Caco-2 (cell line): ENCODE measurements at regions of chr16 and their contacts with region 1.

Region 1: GRCh38 chr16:57720142-57720575 is 15.4 kb upstream of the KATNB1 start:
- DNase-seq: peak; percentile 80 to 90
- H3K4me3 ChIP-seq: no peak overlapping the region
- H3K4me3 Mint-ChIP-seq: no peak overlapping the region
- H3K27ac Mint-ChIP-seq: no peak overlapping the region
- H3K4me1 ChIP-seq: no peaks in the 10 kb centered on the region
- H3K4me1 Mint-ChIP-seq: no peaks in the 10 kb centered on the region
- H3K27me3 ChIP-seq: no peaks in the 10 kb centered on the region
- H3K27me3 Mint-ChIP-seq: no peaks in the 10 kb centered on the region
- CTCF ChIP-seq: peak; percentile 80 to 95

Region 2: GRCh38 chr16:57591086-57591869 is 128.9 kb before region 1 on chr16:
- CTCF ChIA-PET with region 1: interaction called, 4 read pairs
- POLR2A ChIA-PET with region 1: no interaction called
- intact Hi-C with region 1: loop called (anchors 1 kb)
- DNase-seq: peak; percentile 78 to 89
- H3K4me3 ChIP-seq: no peak overlapping the region
- H3K4me3 Mint-ChIP-seq: no peak overlapping the region
- H3K27ac Mint-ChIP-seq: peak overlapping the region; percentile 29
- H3K4me1 ChIP-seq: peaks cover 10% of the 10 kb centered on the region
- H3K4me1 Mint-ChIP-seq: peaks cover 8% of the 10 kb centered on the region
- H3K27me3 ChIP-seq: no peaks in the 10 kb centered on the region
- H3K27me3 Mint-ChIP-seq: no peaks in the 10 kb centered on the region
- CTCF ChIP-seq: peak; percentile 97

Region 3: GRCh38 chr16:57648590-57649442 is 71.3 kb before region 1 on chr16:
- CTCF ChIA-PET with region 1: no interaction called
- POLR2A ChIA-PET with region 1: no interaction called
- intact Hi-C with region 1: loop called (anchors 1 kb)
- DNase-seq: peak; percentile 85 to 93
- H3K4me3 ChIP-seq: no peak overlapping the region
- H3K4me3 Mint-ChIP-seq: no peak overlapping the region
- H3K27ac Mint-ChIP-seq: no peak overlapping the region
- H3K4me1 ChIP-seq: peaks cover 10% of the 10 kb centered on the region; the same call in 1 of the 2 replicates
- H3K4me1 Mint-ChIP-seq: peaks cover 14% of the 10 kb centered on the region
- H3K27me3 ChIP-seq: no peaks in the 10 kb centered on the region
- H3K27me3 Mint-ChIP-seq: no peaks in the 10 kb centered on the region
- CTCF ChIP-seq: peak; percentile 100

Region 4: GRCh38 chr16:57675741-57676584 is 44.2 kb before region 1 on chr16:
- CTCF ChIA-PET with region 1: interaction called, 3 read pairs
- POLR2A ChIA-PET with region 1: no interaction called
- intact Hi-C with region 1: loop called (anchors 1 kb)
- DNase-seq: peak in 1 of 2 experiments; percentile 42
- H3K4me3 ChIP-seq: no peak overlapping the region
- H3K4me3 Mint-ChIP-seq: no peak overlapping the region
- H3K27ac Mint-ChIP-seq: no peak overlapping the region
- H3K4me1 ChIP-seq: peaks cover 24% of the 10 kb centered on the region
- H3K4me1 Mint-ChIP-seq: peaks cover 23% of the 10 kb centered on the region
- H3K27me3 ChIP-seq: no peaks in the 10 kb centered on the region
- H3K27me3 Mint-ChIP-seq: no peaks in the 10 kb centered on the region
- CTCF ChIP-seq: no peak

Region 5: DNA sequence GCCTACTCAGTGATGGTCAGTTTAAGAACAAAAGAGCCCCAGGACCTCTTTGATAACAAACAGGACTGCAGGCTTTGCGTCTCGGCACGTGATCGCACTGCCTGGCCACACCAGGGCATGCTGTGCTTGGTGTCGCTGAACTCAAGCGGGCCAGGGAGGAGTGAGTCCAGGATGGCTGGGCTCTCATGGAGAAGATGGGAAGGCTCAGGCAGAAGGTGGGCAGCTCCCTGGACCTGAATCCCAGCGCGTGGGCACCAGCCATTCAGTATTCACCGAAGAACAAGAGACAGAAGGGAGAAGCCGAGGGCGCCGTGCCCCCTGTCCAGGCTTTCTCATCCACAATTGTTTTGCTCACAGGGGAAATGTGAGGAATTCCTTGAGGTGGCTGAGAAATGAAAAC is 27.3 kb after region 1 on chr16:
- CTCF ChIA-PET with region 1: no interaction called
- POLR2A ChIA-PET with region 1: no interaction called
- intact Hi-C with region 1: no loop called
- DNase-seq: no peak
- H3K4me3 ChIP-seq: no peak overlapping the region
- H3K4me3 Mint-ChIP-seq: no peak overlapping the region
- H3K27ac Mint-ChIP-seq: no peak overlapping the region
- H3K4me1 ChIP-seq: peaks cover 4% of the 10 kb centered on the region; the same call in 1 of the 2 replicates
- H3K4me1 Mint-ChIP-seq: no peaks in the 10 kb centered on the region
- H3K27me3 ChIP-seq: no peaks in the 10 kb centered on the region
- H3K27me3 Mint-ChIP-seq: no peaks in the 10 kb centered on the region
- CTCF ChIP-seq: no peak

Region 6: GRCh38 chr16:58025351-58026138 is 305.4 kb after region 1 on chr16 and contains the start of gene MMP15:
- CTCF ChIA-PET with region 1: no interaction called
- POLR2A ChIA-PET with region 1: no interaction called
- intact Hi-C with region 1: no loop called
- DNase-seq: peak; percentile 99 to 100
- H3K4me3 ChIP-seq: peak within 1 kb of the TSS; percentile 74
- H3K4me3 Mint-ChIP-seq: peak within 1 kb of the TSS; percentile 81
- H3K27ac Mint-ChIP-seq: peak within 1 kb of the TSS; percentile 95
- H3K4me1 ChIP-seq: peaks cover 16% of the 10 kb centered on the region
- H3K4me1 Mint-ChIP-seq: peaks cover 14% of the 10 kb centered on the region
- H3K27me3 ChIP-seq: no peaks in the 10 kb centered on the region
- H3K27me3 Mint-ChIP-seq: no peaks in the 10 kb centered on the region
- CTCF ChIP-seq: no peak
- total RNA-seq, gene MMP15: 27.0 and 27.3 TPM in 2 replicates